Heart left ventricle (tissue), 16 donors: ENCODE measurements at regions of chr9 and their contacts with region 1.

Region 1: DNA sequence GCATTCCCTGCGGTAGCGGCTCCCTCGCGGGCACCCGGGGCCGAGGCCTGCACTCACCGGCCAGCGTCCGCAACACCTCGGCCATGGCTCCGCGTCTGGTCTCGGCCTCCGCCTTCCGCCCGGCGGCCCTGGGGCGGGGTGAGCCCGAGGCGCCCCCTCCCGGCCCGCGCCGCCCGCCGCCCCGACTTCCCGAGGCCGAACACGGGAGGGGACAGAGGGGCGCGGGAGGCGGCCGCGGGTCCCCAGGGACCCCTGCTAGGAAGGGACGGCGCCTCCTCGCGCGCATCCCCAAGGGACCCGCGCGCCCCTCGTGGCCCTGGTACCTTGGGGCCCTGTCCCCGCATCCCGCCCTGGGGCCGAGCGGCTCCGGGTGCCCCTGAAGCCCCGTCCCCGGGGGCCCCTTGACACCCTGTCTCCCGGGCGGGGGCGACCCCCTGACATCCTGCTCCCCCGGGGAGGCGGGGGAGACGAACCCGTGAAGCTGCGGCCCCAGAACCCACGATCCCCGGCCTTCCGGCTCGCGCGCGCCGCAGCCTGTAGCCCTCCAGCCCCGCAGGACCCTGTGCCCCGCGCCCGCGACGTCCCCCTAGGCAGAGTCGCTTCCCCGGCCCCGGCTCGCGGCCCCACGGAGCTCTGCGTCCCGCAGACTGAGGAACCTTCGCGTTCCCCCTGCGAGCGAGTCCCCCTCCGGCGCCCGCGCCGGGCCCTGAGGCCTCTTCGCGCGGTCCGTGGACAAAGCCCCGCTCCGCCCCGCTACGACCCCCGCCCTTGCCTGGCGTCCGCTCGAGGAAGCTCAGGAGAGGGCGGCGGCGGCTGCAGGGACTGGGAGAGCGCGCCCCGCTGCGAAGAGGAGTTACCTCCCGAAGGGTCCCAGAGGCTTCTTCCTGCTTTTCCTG is at the start of gene ABO:
- DNase-seq: peak; percentile 44 to 77 (median 60)
- ATAC-seq: peak in 3 of 4 donors; percentile 79 to 87 (median 80)
- H3K4me3 ChIP-seq: peak within 1 kb of the TSS; percentile 47 to 84 (median 70)
- H3K27ac ChIP-seq: peak within 1 kb of the TSS; percentile 55 to 93 (median 82)
- H3K4me1 ChIP-seq: peaks cover 0 to 21% (median 0%) of the 10 kb centered on the region in 12 donors
- H3K27me3 ChIP-seq: peaks cover 0 to 34% (median 11%) of the 10 kb centered on the region in 9 donors
- CTCF ChIP-seq: peak in 11 of 12 donors; percentile 7 to 65 (median 45)
- POLR2A ChIP-seq: peak in 1 of 2 donors; percentile 19
- total RNA-seq, gene ABO: 0.91 to 3.5 (median 2.1) TPM

Region 2: GRCh38 chr9:133226219-133227171 is 48.9 kb before region 1 on chr9:
- intact Hi-C with region 1: no loop called
- DNase-seq: no peak
- ATAC-seq: no peak
- H3K4me3 ChIP-seq: no peak overlapping the region
- H3K27ac ChIP-seq: peak overlapping the region in 2 of 12 donors; percentile 1 to 55
- H3K4me1 ChIP-seq: peaks cover 0 to 10% (median 2%) of the 10 kb centered on the region in 12 donors
- H3K27me3 ChIP-seq: peaks cover 0 to 4% (median 0%) of the 10 kb centered on the region in 9 donors
- CTCF ChIP-seq: no peak
- POLR2A ChIP-seq: no peak

Region 3: DNA sequence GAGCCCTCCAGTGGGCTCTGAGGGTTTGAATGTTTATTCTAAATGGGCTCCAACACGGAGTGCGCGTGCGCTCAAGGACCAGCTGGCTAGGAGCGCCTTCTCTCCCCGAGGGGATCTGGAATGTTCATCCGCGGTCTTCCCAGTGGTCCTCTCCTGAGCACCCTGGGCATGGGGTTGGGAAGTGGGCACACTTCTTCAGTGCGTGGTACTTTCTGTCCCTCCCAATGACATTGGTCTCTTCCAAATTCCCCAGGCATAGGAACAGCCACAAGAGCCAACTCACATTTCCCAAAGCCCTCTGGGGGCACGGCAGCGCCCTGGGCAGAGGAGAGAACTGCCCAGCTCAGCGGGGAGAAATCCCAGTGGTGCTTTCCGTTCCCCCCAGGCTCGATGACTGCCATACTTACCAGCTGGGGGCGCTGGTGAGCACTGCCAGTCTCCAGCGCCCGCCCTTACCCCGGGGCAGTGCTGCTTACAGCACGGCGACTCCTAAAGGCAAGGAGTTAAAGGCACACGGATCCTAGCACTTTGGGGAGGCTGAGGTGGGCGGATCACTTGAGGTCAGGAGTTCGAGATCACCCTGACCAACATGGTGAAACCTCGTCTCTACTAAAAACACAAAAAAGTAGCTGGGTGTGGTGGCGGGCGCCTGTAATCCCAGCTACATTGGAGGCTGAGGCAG is 36.4 kb before region 1 on chr9:
- intact Hi-C with region 1: loop called in 3 of 10 experiments (anchors 2 to 5 kb)
- DNase-seq: peak; percentile 54 to 82 (median 66)
- ATAC-seq: peak; percentile 43 to 73 (median 65)
- H3K4me3 ChIP-seq: peak overlapping the region in 11 of 12 donors; percentile 18 to 59 (median 45)
- H3K27ac ChIP-seq: peak overlapping the region; percentile 65 to 95 (median 88)
- H3K4me1 ChIP-seq: peaks cover 0 to 30% (median 21%) of the 10 kb centered on the region in 12 donors
- H3K27me3 ChIP-seq: no peaks in the 10 kb centered on the region
- CTCF ChIP-seq: peak; percentile 64 to 87 (median 78)
- POLR2A ChIP-seq: no peak

Region 4: GRCh38 chr9:133320421-133320881 is 45.1 kb after region 1 on chr9:
- intact Hi-C with region 1: loop called in 2 of 10 experiments (anchors 5 to 10 kb)
- DNase-seq: no peak
- ATAC-seq: no peak
- H3K4me3 ChIP-seq: no peak overlapping the region
- H3K27ac ChIP-seq: no peak overlapping the region
- H3K4me1 ChIP-seq: no peaks in the 10 kb centered on the region
- H3K27me3 ChIP-seq: no peaks in the 10 kb centered on the region
- CTCF ChIP-seq: no peak
- POLR2A ChIP-seq: no peak

Region 5: GRCh38 chr9:133327834-133328484 is 52.6 kb after region 1 on chr9:
- intact Hi-C with region 1: loop called in 2 of 10 experiments (anchors 5 to 10 kb)
- DNase-seq: peak in 1 of 5 donors; percentile 4
- ATAC-seq: peak in 1 of 4 donors; percentile 28
- H3K4me3 ChIP-seq: no peak overlapping the region
- H3K27ac ChIP-seq: no peak overlapping the region
- H3K4me1 ChIP-seq: no peaks in the 10 kb centered on the region
- H3K27me3 ChIP-seq: no peaks in the 10 kb centered on the region
- CTCF ChIP-seq: no peak
- POLR2A ChIP-seq: no peak

Region 6: GRCh38 chr9:133387425-133388079 is 112.2 kb after region 1 on chr9:
- intact Hi-C with region 1: no loop called
- DNase-seq: peak in 1 of 5 donors; percentile 14
- ATAC-seq: no peak
- H3K4me3 ChIP-seq: no peak overlapping the region
- H3K27ac ChIP-seq: no peak overlapping the region
- H3K4me1 ChIP-seq: no peaks in the 10 kb centered on the region
- H3K27me3 ChIP-seq: peaks cover 0 to 4% (median 0%) of the 10 kb centered on the region in 9 donors
- CTCF ChIP-seq: no peak
- POLR2A ChIP-seq: no peak